ENCODE measurements at regions of chr20 and their contacts with region 1.

Region 1: GRCh38 chr20:53739799-53740785 is 146.5 kb upstream of the ZNF217 start:
- DNase-seq: peak; percentile 24
- H3K4me3 Mint-ChIP-seq: peak overlapping the region; percentile 75
- H3K27ac Mint-ChIP-seq: peak overlapping the region; percentile 74
- H3K4me1 Mint-ChIP-seq: peaks cover 38% of the 10 kb centered on the region
- H3K27me3 Mint-ChIP-seq: no peaks in the 10 kb centered on the region

Region 2: DNA sequence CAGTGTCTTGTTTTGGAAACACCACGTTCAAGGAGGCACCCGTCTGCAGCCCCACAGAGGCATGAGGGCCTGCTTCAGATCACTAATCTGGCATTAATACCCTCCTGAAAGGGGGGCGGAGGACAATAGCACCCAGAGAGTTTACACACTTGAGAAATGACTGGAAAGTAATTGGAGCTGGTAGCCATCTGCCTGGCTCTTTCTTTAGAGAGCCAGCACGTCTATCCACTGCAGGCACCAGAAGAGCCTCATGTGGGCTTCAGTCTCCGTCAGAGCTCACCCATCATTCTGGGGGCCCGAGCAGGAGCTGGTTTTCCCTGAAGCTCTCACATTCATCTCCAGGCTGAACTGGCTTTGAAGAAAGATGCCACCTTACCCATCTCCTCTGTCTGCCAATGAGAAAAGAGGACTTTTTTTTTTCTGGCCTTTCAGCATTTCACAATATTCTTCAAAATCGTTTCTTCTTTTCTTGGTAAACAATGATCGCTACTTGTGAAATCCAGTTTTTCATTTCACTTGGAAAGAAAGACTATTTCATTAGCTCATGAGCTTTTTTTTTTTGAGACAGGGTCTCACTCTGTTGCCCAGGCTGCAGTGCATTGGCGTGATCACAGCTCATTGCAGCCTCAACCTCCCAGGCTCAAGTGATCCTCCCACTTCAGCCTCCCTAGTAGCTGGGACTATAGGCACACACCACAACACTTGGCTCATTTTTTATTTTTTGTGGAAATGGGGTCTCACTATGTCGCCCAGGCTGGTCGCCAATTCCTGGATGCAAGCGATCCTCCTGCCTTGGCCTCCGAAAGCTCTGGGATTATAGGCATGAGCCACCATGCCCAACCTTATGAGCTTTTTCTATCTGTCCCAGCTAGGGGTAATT is 21.7 kb before region 1 on chr20:
- CTCF ChIA-PET with region 1: no interaction called
- POLR2A ChIA-PET with region 1: no interaction called
- intact Hi-C with region 1: loop called (anchors 1 kb)
- DNase-seq: no peak
- H3K4me3 Mint-ChIP-seq: no peak overlapping the region
- H3K27ac Mint-ChIP-seq: no peak overlapping the region
- H3K4me1 Mint-ChIP-seq: peaks cover 13% of the 10 kb centered on the region
- H3K27me3 Mint-ChIP-seq: no peaks in the 10 kb centered on the region

Region 3: DNA sequence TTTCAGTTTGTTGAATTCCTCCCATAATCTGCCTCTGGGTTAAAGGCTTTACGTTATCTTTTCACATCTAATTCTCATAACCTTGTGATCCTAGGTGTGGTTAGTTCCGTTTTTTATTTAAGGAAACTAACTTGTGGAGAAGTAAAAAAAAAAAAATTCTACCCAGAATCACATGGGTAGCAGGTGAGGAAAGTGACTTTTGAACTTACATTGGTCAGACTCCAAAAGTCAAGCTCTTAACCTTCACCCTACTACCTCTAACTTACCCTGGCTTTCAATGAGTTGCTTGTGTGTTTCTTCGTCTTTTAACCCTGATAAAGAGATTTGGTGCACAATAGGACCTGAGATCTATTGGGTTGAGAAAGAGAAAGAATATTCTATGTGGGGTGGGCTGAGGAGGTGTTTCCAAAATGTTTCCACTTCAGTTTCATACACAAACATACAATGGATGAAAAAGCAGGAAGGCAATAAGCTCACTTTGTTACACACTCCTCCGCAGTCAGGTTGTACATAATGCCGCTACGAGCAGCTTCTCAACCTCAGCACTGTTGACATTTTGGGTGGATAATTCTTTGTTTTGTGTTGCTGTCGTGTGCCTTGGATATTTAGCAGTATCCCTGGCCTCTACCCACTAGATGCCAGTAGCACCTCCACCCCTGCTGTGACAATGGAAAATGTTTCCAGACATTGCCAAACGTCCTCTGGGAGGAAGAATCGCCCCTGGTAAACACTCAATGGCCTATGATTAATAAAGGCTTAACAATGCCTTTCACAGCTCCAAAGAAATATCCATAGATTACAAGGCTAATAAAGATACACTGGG is 46.6 kb after region 1 on chr20:
- CTCF ChIA-PET with region 1: no interaction called
- POLR2A ChIA-PET with region 1: no interaction called
- intact Hi-C with region 1: no loop called
- DNase-seq: no peak
- H3K4me3 Mint-ChIP-seq: no peak overlapping the region
- H3K27ac Mint-ChIP-seq: no peak overlapping the region
- H3K4me1 Mint-ChIP-seq: peaks cover 11% of the 10 kb centered on the region
- H3K27me3 Mint-ChIP-seq: no peaks in the 10 kb centered on the region